Cardiac septum (tissue), 1 donor: ENCODE measurements at regions of chr4 and their contacts with region 1.

Region 1: DNA sequence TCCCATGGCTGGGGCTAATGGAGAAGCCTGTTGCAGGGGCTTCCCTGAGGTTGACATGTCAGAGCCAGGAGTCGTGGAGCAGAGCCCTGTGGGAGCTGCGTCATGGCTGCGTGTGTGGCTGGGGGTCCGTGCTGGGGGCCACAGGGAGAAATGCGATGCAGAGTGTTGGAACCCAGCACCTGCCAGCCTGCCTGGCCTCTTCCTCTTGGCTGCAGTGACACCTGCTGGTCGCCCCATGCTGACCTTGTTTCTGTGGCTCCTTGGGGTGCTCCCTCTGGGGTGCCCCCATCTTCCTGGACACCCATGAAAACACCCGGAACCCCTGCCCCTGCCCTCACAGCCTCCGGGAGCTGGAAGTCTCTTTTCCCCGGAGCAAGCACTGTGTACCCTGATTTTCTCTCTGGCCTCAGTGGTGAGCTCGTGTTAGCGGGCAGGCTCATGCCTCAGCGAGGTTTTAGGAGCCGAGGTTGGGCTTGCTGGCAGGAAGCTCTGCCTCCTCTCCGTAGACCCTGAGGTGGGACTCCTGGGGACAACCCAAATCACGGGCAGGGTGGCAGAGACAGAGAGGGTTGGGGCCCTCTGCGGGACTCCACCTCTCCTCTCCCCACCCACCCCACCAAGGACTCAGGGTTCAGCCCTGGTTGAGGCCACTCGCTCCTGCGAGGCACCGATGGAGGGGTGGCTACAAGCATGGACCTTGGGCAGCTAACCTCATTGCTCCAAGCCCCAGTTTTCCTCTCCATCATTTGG is 103.7 kb downstream of the SORCS2 start:
- DNase-seq: no peak

Region 2: DNA sequence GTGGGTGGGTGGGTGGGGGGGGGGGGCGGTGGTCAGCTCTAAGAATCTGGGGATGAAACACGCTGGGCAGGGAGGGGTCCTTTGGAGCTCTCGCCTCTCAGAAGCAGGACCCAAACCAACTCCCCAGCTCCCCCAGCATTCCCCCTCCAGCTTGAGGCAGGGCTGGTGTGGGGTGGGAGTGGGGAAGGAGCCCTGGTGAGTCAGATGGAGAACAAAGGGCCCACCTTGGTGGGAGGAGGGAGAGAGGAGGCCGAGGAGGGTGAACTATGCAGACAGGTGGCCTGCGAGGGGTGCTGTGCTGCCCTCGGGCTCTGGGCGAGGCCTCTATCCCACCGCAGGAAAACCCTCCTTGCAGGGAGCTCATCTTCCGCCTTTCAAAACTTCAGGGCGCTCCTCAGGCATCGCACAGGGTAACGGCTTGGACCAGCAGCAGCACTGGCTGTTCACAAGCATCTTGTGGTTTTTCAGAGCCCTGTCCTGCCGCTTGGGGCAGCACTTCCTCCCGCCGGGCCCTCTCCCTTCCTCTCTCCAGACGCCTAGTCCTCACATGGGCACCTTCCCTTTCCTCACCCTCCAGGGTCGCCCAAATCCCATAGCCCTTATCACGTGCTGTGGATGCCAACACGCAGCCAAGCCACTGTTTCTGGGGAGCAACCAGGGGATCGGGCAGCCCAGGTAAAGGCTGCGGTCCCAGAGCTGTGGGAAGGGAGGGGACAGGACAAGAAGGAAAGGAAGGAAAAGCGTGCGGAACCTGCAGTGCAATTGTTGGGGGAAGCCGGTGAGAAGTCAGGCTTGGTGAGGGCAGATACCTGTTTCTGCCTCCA is 194.2 kb before region 1 on chr4:
- intact Hi-C with region 1: loop called (anchors 10 kb)
- DNase-seq: peak; percentile 87

Region 3: GRCh38 chr4:7192252-7193029 is 103.6 kb before region 1 on chr4 and contains the start of gene SORCS2:
- intact Hi-C with region 1: loop called (anchors 1 kb)
- DNase-seq: peak; percentile 77
- total RNA-seq, gene SORCS2: 6.9 TPM

Region 4: DNA sequence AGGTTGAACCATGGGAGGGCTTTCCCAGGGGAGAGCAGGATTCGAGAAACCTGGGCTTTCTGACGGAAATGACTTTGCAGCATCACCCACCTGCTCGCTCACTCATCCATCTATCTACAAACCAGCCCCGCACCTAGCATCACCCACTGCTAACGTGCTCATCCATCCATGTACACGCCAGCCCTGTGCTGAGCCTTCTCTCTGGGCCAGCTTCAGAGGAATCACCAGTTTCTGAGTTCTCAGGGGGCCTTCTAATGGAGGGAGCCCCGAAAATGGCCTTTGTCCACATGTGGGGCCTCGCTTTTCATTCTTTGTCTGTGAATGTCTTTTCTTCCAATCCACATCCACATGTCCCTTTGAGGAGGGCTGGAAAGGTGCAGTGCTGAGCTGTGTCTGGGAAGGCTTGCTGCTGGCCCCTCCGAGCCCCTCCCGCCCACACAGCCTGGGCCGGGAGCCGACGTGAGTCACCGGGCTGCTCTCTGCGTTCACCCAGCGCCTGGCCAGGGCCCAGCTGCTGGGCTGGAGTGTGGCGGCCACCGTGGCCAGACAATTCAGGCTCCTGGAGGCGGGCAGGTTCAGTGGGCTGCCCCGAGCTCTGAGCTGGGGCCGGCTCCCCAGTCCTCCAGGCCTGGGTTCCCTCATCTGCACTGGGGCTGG is 89.0 kb before region 1 on chr4:
- intact Hi-C with region 1: loop called (anchors 5 kb)
- DNase-seq: peak; percentile 86

Region 5: GRCh38 chr4:7254736-7255487 is 41.2 kb before region 1 on chr4:
- intact Hi-C with region 1: loop called (anchors 5 kb)
- DNase-seq: no peak